AG04450 (cell line): ENCODE measurements at regions of chr17 and their contacts with region 1.

Region 1: GRCh38 chr17:78401891-78402290 is 23.4 kb downstream of the PGS1 start:
- DNase-seq: no peak
- H3K4me3 ChIP-seq: no peak overlapping the region
- H3K27ac ChIP-seq: no peak overlapping the region
- H3K27me3 ChIP-seq: no peaks in the 10 kb centered on the region
- CTCF ChIP-seq: no peak

Region 2: GRCh38 chr17:78412403-78412802 is 10.5 kb after region 1 on chr17:
- CTCF ChIA-PET with region 1: interaction called, 3 read pairs
- POLR2A ChIA-PET with region 1: interaction called, 13 read pairs
- DNase-seq: no peak
- H3K4me3 ChIP-seq: no peak overlapping the region
- H3K27ac ChIP-seq: no peak overlapping the region
- H3K27me3 ChIP-seq: no peaks in the 10 kb centered on the region
- CTCF ChIP-seq: peak; percentile 45